ENCODE measurements at regions of chr4 and their contacts with region 1.

Region 1: GRCh38 chr4:89024051-89024675 is 32.8 kb downstream of the FAM13A start:
- DNase-seq: peak; percentile 76
- ATAC-seq: peak; percentile 81
- H3K4me3 ChIP-seq: no peak overlapping the region
- H3K27ac ChIP-seq: no peak overlapping the region
- H3K4me1 ChIP-seq: no peaks in the 10 kb centered on the region
- H3K27me3 ChIP-seq: no peaks in the 10 kb centered on the region
- CTCF ChIP-seq: peak; percentile 82

Region 2: DNA sequence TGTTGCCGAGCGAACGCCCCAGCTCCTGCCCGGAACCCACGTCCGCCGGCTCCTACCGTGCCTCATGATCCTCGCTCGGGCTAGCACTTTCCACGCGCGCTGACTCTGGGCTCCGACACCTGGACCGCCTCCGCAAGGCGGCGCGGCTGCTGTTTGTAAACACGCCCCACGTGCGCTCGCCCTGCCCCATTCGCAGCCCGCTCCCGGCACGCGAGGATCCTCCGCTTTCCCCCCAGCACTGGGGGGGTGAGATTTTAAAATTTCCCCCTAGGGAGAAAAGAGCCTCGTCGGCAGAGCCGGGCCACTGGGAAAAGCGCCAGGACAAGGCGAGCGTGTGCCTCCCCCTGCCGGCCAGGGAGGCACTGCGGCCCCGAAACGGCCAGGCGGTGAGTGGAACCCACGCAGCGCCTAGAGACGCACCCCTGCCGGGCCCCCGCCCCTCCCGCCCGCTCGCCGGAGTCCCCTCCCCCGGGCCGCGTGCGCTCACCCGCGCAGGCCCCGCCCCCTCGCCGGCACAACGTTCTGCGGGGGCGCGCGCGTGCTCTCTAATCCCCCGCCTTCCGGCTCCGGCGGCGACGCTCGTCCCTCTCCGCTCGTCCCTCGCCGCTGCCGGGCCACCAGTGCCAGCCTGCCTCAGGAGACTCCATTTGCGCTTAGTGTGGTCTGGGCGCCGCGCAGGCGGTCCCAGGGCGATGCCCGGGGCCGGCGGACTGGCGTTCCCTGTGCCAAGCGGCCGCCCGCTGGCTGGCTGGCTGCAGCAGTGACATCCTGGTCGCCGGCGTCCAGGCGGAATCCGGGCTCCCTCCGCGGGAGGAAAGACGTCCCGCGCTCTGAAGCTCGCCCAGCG is 87.0 kb after region 1 on chr4 and contains the start of gene TIGD2:
- CTCF ChIA-PET with region 1: no interaction called
- POLR2A ChIA-PET with region 1: no interaction called
- intact Hi-C with region 1: loop called (anchors 2 kb)
- DNase-seq: peak; percentile 82
- ATAC-seq: peak; percentile 90
- H3K4me3 ChIP-seq: peak within 1 kb of the TSS; percentile 86
- H3K27ac ChIP-seq: 0 out of 2 replicates have a peak within 1 kb of the TSS, but pooled peaks have one; percentile 11
- H3K4me1 ChIP-seq: peaks cover 16% of the 10 kb centered on the region
- H3K27me3 ChIP-seq: peaks cover 5% of the 10 kb centered on the region; the same call in 1 of the 2 replicates
- CTCF ChIP-seq: peak; percentile 62
- total RNA-seq, gene TIGD2: 4.2 and 5.4 TPM in 2 replicates

Region 3: DNA sequence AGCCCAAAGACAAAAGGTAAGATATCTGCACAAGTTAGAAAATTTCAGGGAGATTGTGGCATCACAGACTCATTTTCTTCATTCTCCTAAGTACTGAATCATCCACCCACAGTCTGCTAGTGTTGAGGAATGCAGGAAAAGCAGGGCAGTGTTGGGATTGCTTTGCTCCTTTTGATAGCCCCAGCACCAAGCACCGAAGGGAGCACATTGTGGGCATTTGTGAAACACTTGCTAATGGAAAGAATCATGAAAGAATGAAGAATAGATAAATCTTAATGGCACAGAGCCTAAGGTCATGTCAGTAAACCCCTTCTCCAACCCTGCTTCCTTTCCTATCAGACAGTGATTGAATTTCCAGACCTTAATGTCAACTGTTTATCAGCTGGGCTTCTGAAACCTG is 386.5 kb after region 1 on chr4:
- CTCF ChIA-PET with region 1: no interaction called
- POLR2A ChIA-PET with region 1: no interaction called
- intact Hi-C with region 1: no loop called
- DNase-seq: no peak
- ATAC-seq: no peak
- H3K4me3 ChIP-seq: no peak overlapping the region
- H3K27ac ChIP-seq: no peak overlapping the region
- H3K4me1 ChIP-seq: no peaks in the 10 kb centered on the region
- H3K27me3 ChIP-seq: peaks cover 34% of the 10 kb centered on the region
- CTCF ChIP-seq: no peak

Measured in PC-3 (cell line).